CD14-positive monocyte (primary cell): ENCODE measurements at regions of chr4 and their contacts with region 1.

Region 1: DNA sequence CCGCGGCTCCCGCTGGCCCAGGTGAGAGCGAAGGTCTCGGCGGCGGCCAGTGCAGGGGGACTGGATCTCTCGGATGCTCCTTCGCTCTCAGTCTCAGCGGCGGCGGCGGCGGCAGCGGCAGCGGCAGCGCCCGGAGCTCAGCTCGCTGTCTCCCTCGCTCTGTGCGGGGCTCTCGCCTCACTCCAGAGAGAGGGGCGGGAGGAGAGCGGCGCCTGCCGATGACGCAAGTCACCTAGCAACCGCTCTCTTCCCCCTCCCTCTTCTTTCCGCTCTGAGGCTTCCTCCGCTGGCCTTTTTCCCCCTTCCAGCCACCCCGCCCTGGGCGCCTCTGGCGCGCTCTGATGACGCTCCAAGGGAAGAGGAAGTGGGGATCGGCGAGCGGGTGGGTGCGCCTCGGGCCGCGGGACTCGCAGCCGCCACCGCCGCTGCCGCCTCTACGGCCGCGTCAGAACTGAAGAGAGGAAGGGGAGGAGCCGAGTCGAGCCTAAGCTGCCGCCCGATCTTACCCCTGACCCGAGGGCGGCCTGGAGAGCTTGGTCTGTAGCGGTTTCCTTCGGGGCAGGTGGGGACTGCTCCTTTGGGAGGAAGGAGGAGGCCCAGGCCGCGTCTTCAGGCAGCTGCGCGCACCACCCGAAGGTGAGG is at the start of gene FBXW7:
- DNase-seq: peak; percentile 97 to 100 (median 99)
- H3K4me3 ChIP-seq: peak within 1 kb of the TSS; percentile 82 to 99 (median 93)
- H3K4me3 Mint-ChIP-seq: peak within 1 kb of the TSS; percentile 99 to 100
- H3K27ac ChIP-seq: peak within 1 kb of the TSS; percentile 95 to 98
- H3K27ac Mint-ChIP-seq: peak within 1 kb of the TSS; percentile 97 to 100 (median 100)
- H3K4me1 ChIP-seq: peaks cover 26 to 52% of the 10 kb centered on the region in 2 donors
- H3K4me1 Mint-ChIP-seq: peaks cover 50% of the 10 kb centered on the region
- H3K27me3 ChIP-seq: no peaks in the 10 kb centered on the region
- H3K27me3 Mint-ChIP-seq: no peaks in the 10 kb centered on the region
- CTCF ChIP-seq: no peak
- polyA plus RNA-seq, gene FBXW7: 25.1 to 44.9 (median 35.6) TPM

Region 2: DNA sequence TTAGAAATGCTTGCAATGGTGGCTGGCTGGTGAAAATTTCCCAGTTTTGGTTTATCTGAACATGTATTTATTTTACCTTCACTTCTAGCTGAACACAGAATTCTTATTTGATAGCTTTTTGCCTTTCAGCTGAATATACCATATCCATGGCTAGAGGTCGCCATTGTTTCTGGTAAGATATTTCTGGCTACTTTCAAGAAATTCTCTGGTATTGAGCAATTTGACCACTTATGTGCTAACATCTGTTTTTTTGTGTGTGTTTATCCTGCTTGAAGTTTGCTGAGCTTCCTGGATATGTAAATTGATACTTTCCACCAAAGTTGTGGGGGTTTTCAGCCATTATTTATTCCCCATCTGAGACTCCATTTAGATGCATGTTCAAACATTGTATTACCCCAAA is 75.5 kb before region 1 on chr4:
- intact Hi-C with region 1: loop called (anchors 10 kb)
- DNase-seq: peak; percentile 48 to 77 (median 61)
- H3K4me3 ChIP-seq: peak overlapping the region in 1 of 3 experiments; percentile 25
- H3K4me3 Mint-ChIP-seq: peak overlapping the region in 1 of 2 donors; percentile 67
- H3K27ac ChIP-seq: peak overlapping the region; percentile 52 to 68
- H3K27ac Mint-ChIP-seq: peak overlapping the region; percentile 73 to 93 (median 85)
- H3K4me1 ChIP-seq: peaks cover 71 to 78% of the 10 kb centered on the region in 2 donors
- H3K4me1 Mint-ChIP-seq: peaks cover 74% of the 10 kb centered on the region
- H3K27me3 ChIP-seq: no peaks in the 10 kb centered on the region
- H3K27me3 Mint-ChIP-seq: no peaks in the 10 kb centered on the region
- CTCF ChIP-seq: peak; percentile 50

Region 3: DNA sequence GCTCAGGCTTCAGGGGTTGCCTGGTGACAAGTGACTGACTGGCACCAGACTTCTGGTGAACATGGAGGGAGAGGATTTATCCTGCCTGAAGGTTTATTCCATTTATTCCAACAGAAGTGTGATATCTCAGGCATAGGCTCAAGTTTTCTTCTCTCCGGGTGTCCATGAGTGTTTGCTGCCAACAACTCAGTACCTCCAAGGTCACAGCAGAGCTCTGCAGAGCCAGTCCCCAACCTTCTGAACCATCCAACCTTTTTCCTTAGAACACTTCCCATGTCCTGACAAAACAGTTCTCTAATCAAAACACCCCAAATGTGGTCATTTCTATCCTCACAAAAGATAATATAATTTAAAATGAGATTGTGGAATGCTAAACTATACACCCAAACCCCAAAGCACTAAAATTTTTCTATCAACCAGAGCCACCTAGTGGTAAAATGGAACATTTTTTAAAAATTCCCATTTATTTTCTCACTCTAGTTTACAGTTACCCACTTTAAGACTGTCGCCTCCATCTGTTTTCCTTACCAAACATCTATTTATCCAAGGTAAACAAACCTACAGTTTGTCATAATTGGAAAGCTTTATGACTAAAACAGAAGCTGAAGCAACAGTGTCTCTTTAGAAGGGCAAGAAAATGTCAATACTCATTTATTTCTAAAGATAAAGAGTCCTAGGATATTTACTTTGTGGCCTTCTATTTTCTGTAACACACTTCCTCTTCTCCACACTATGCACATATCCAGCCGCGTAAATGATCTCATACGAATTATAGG is 104.2 kb after region 1 on chr4:
- intact Hi-C with region 1: loop called (anchors 5 kb)
- DNase-seq: peak in 1 of 3 donors; percentile 35
- H3K4me3 ChIP-seq: peak overlapping the region in 1 of 3 experiments; percentile 9
- H3K4me3 Mint-ChIP-seq: peak overlapping the region in 1 of 2 donors; percentile 65
- H3K27ac ChIP-seq: peak overlapping the region; percentile 41 to 95
- H3K27ac Mint-ChIP-seq: peak overlapping the region; percentile 81 to 97 (median 88)
- H3K4me1 ChIP-seq: peaks cover 90 to 100% of the 10 kb centered on the region in 2 donors
- H3K4me1 Mint-ChIP-seq: peaks cover 88% of the 10 kb centered on the region
- H3K27me3 ChIP-seq: no peaks in the 10 kb centered on the region
- H3K27me3 Mint-ChIP-seq: peaks cover 0 to 2% (median 2%) of the 10 kb centered on the region in 3 donors
- CTCF ChIP-seq: peak; percentile 90

Region 4: GRCh38 chr4:152779513-152780266 is 243.7 kb after region 1 on chr4 and contains the starts of genes ARFIP1 and TIGD4:
- intact Hi-C with region 1: loop called (anchors 5 to 10 kb)
- DNase-seq: peak; percentile 92 to 95 (median 94)
- H3K4me3 ChIP-seq: peak within 1 kb of the TSS; percentile 72 to 95 (median 77)
- H3K4me3 Mint-ChIP-seq: peak within 1 kb of the TSS; percentile 100
- H3K27ac ChIP-seq: peak within 1 kb of the TSS; percentile 83 to 85
- H3K27ac Mint-ChIP-seq: peak within 1 kb of the TSS; percentile 93 to 99 (median 98)
- H3K4me1 ChIP-seq: peaks cover 42 to 54% of the 10 kb centered on the region in 2 donors
- H3K4me1 Mint-ChIP-seq: peaks cover 55% of the 10 kb centered on the region
- H3K27me3 ChIP-seq: peaks cover 0 to 2% of the 10 kb centered on the region in 2 donors
- H3K27me3 Mint-ChIP-seq: peaks cover 4 to 6% (median 4%) of the 10 kb centered on the region in 3 donors
- CTCF ChIP-seq: peak; percentile 23
- polyA plus RNA-seq, gene ARFIP1: 11.7 to 28.4 (median 27.2) TPM
- polyA plus RNA-seq, gene TIGD4: 0.05 to 0.08 (median 0.07) TPM